Common myeloid progenitor, CD34-positive (primary cell): ENCODE measurements at regions of chr17 and their contacts with region 1.

Region 1: DNA sequence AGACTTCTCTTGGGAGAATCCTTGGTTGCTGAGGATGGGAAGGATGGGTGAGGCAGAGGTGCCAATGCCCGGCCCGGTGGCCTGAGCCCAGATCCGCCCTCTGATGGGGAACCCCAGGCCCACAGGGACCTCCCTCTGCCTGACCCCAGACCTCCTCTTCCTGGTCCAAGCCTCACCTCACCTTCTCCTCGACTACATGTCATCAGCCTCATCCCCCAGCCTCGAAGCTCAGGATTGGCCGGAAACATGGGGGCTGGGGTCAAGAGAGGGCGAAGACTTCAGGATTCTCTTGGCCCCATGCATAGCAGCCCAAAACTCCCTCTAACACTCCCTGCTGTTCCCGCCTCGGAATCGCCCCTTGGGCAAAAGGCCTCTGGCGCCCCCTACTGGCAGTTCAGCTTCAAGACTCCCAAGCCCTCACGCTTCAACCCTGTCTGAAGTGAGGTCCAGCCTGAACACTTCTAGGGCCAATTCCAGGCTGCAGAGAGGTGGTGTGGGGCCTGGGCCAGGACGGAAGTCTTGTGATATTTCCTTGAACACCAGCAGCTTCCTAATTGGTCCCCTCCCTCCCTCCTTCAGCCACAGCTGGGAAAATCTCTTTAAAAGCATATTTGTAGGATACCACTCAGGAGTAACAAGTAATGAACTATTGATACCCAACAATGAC is 47.2 kb downstream of the ARHGAP27 start:
- DNase-seq: peak; percentile 80 to 87 (median 80)
- H3K4me3 ChIP-seq: no peak overlapping the region
- H3K27ac ChIP-seq: no peak overlapping the region
- H3K4me1 ChIP-seq: peaks cover 0 to 37% (median 20%) of the 10 kb centered on the region in 4 experiments
- H3K27me3 ChIP-seq: no peaks in the 10 kb centered on the region

Region 2: GRCh38 chr17:45218895-45219661 is 166.4 kb before region 1 on chr17:
- CTCF ChIA-PET with region 1: interaction called, 41 read pairs
- POLR2A ChIA-PET with region 1: no interaction called
- DNase-seq: peak; percentile 72 to 84 (median 74)
- H3K4me3 ChIP-seq: peak overlapping the region in 1 of 7 experiments; percentile 23
- H3K27ac ChIP-seq: no peak overlapping the region
- H3K4me1 ChIP-seq: peaks cover 15 to 42% (median 34%) of the 10 kb centered on the region in 4 experiments
- H3K27me3 ChIP-seq: no peaks in the 10 kb centered on the region

Region 3: DNA sequence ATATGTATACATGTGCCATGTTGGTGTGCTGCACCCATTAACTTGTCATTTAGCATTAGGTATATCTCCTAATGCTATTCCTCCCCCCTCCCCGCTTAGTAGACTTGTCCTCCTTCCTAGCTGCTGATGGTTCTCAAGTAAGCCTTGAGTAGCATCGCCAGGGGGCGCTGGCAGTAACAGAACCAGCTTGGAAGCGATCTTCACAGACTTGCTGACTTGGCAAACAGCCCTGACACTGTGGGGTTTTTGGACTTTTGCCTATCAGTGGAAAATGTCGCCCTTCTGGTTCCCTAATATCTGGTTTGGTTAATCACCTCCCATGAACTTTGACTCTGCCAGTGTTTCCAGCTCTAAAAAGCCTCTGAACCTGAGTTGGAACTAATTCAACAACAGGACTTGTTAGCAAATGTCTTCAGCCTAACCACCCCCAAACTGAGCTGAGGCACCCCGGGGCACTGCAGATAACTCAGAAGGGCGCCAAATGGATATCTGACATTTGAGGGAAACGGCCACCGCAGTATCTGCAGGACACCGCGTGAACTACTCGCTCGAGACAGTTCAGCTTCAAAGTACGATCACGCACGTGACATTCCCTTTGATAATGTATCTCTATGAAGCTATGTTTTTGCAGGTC is 108.1 kb before region 1 on chr17:
- CTCF ChIA-PET with region 1: interaction called, 169 read pairs
- POLR2A ChIA-PET with region 1: interaction called, 5 read pairs
- DNase-seq: peak; percentile 95 to 98 (median 95)
- H3K4me3 ChIP-seq: no peak overlapping the region
- H3K27ac ChIP-seq: no peak overlapping the region
- H3K4me1 ChIP-seq: peaks cover 0 to 6% (median 6%) of the 10 kb centered on the region in 4 experiments
- H3K27me3 ChIP-seq: no peaks in the 10 kb centered on the region

Region 4: DNA sequence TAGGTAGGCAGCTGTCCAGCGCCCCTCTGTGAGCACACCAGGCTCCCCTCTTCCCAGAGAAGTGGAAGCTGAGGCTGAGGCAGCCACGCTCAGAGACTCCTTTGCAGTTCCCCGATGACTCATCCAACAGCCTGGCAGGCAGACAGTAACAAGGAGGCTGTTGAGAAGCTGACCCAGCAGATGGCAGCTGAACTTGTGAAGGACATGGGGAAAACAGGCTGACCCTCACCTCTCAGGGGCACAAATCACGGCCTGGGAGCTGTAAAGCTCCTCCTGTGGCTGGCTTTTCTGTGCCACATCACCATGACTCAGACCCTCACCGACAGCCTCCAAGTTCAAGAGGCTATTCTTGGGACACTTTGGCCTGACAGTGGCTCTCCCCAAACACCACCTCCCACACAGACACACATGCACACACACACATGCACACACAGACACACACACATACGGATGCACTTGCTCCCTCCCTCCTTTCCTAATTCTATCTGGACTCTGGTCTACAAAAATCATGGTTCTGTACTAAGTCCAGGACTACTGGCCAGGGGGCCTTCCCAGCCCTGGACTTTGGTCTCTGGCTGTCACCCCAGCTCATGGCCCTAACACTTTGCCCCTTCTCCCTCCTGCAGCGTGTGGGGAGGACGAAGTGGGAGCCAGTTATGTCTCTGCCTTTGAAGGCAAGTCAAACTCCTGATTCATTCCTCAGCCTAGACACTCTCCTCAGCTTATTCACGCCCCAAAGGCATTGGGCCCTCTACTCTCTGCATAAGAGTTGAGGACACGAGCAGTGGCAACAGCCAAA is 91.9 kb before region 1 on chr17:
- CTCF ChIA-PET with region 1: interaction called, 35 read pairs
- POLR2A ChIA-PET with region 1: no interaction called
- DNase-seq: peak in 2 of 3 donors; percentile 42 to 59
- H3K4me3 ChIP-seq: no peak overlapping the region
- H3K27ac ChIP-seq: no peak overlapping the region
- H3K4me1 ChIP-seq: peaks cover 17 to 82% (median 55%) of the 10 kb centered on the region in 4 experiments
- H3K27me3 ChIP-seq: no peaks in the 10 kb centered on the region

Region 5: DNA sequence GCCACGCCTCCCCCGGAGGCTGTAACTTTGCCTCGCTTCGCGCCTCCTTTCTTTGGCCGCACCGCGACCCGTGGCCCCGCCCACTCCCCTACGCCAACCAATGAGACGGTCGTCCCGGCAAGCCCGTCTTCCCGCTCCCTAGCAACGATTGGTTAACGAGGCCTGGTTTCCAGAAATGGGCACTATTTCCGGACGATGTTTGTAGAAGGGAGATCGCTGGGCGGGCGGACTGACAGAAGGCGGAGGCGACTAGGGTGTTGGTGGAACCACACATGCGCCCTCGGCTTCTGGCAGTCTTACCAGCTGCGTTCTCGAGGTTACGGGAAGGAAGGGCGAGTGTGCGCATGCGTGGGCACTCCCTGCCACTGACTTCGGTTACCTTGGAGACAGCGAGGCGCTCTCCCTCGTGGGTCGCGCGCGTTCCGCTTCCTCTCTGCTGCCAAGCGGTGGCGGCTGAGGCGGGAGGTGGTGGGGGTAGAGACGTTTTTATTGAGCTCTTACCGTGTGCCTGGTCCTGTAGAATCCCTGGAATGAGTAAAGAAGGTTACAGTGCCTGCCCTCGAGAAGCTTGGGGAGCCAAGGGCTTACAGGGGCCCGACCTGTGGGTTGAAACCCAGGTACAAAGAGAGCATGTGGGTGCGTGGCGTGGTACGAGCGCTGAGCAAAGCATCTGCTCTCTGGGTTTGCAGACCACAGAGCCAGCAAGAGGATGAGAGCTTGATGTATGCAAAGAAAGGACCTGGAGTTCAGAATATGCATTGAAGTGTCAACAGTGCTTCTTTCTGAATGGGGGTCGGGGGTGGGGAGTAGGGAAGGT is 68.1 kb before region 1 on chr17:
- CTCF ChIA-PET with region 1: interaction called, 20 read pairs
- POLR2A ChIA-PET with region 1: no interaction called
- DNase-seq: peak; percentile 100
- H3K4me3 ChIP-seq: peak overlapping the region; percentile 40 to 88 (median 83)
- H3K27ac ChIP-seq: peak overlapping the region; percentile 17 to 84
- H3K4me1 ChIP-seq: peaks cover 39 to 70% (median 67%) of the 10 kb centered on the region in 4 experiments
- H3K27me3 ChIP-seq: no peaks in the 10 kb centered on the region

Region 6: GRCh38 chr17:45371414-45372327 is 13.8 kb before region 1 on chr17:
- CTCF ChIA-PET with region 1: interaction called, 26 read pairs
- POLR2A ChIA-PET with region 1: interaction called, 3 read pairs
- DNase-seq: peak; percentile 51 to 80 (median 67)
- H3K4me3 ChIP-seq: peak overlapping the region in 5 of 7 experiments; percentile 13 to 71 (median 53)
- H3K27ac ChIP-seq: no peak overlapping the region
- H3K4me1 ChIP-seq: peaks cover 0 to 18% (median 16%) of the 10 kb centered on the region in 4 experiments
- H3K27me3 ChIP-seq: no peaks in the 10 kb centered on the region

Region 7: DNA sequence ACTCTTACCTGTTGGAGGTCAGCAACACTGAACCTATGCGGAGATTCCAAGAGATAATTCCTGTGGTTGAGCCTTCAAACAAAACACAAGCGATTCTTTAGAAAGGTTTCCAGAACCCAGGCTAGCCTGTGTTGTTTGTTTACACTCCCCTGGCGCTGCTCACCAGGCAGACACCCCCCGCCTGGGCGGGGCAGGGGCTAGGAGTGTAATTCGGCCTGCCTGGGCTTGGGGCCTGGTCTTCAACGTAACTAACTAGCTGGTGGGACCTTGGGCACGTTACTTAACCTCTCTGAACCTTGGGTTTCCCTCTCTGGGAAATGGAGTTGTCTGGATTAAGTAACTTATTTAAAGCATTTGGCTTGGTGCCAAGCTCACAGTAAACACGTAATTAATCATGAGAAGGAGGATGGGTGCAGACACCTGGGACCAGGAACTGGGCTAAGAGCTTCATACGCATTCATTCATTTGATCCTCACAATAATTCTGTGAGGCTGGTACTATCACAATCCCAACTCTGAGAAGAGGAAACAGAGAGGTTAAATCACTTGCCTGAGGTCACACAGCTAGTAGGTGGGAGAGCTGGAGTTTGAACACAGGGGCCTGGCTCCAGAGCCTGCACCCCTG is 54.8 kb after region 1 on chr17:
- CTCF ChIA-PET with region 1: no interaction called
- POLR2A ChIA-PET with region 1: no interaction called
- DNase-seq: peak in 2 of 3 donors; percentile 34 to 40
- H3K4me3 ChIP-seq: peak overlapping the region in 1 of 7 experiments; percentile 58
- H3K27ac ChIP-seq: peak overlapping the region in 1 of 2 experiments; percentile 14
- H3K4me1 ChIP-seq: peaks cover 0 to 35% (median 34%) of the 10 kb centered on the region in 4 experiments
- H3K27me3 ChIP-seq: no peaks in the 10 kb centered on the region